Caco-2 (cell line): ENCODE measurements at regions of chr12 and their contacts with region 1.

Region 1: GRCh38 chr12:44015335-44015941 is 179.6 kb downstream of the TMEM117 start:
- DNase-seq: peak in 1 of 2 experiments; percentile 62
- H3K4me3 ChIP-seq: no peak overlapping the region
- H3K4me3 Mint-ChIP-seq: no peak overlapping the region
- H3K27ac Mint-ChIP-seq: no peak overlapping the region
- H3K4me1 ChIP-seq: peaks cover 7% of the 10 kb centered on the region
- H3K4me1 Mint-ChIP-seq: peaks cover 13% of the 10 kb centered on the region
- H3K27me3 ChIP-seq: no peaks in the 10 kb centered on the region
- H3K27me3 Mint-ChIP-seq: no peaks in the 10 kb centered on the region
- CTCF ChIP-seq: peak; percentile 62 to 72

Region 2: GRCh38 chr12:43893670-43894069 is 121.8 kb before region 1 on chr12:
- CTCF ChIA-PET with region 1: no interaction called
- POLR2A ChIA-PET with region 1: no interaction called
- intact Hi-C with region 1: no loop called
- DNase-seq: no peak
- H3K4me3 ChIP-seq: no peak overlapping the region
- H3K4me3 Mint-ChIP-seq: no peak overlapping the region
- H3K27ac Mint-ChIP-seq: no peak overlapping the region
- H3K4me1 ChIP-seq: 0 out of 2 replicates have a peak, but pooled peaks cover 3% of the 10 kb centered on the region
- H3K4me1 Mint-ChIP-seq: no peaks in the 10 kb centered on the region
- H3K27me3 ChIP-seq: no peaks in the 10 kb centered on the region
- H3K27me3 Mint-ChIP-seq: no peaks in the 10 kb centered on the region
- CTCF ChIP-seq: no peak

Region 3: DNA sequence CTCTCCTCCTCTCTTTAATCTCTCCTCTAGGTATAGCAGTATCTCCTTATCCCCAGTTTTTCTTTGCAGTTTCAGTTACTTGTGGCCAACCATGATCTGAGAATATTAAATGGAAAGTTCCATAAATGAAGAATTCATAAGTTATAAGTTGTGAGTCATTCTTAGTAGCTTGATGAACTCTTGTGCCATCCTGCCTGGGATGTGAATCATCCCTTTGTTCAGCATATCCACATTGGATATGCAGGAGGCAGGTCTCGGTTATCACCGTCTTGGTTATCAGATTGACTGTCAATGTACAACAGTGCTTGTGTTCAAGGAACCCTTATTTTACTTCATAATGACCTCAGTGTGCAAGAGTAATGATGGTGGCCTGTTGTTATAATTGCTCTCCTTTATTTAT is 45.6 kb before region 1 on chr12:
- CTCF ChIA-PET with region 1: no interaction called
- POLR2A ChIA-PET with region 1: no interaction called
- intact Hi-C with region 1: no loop called
- DNase-seq: no peak
- H3K4me3 ChIP-seq: no peak overlapping the region
- H3K4me3 Mint-ChIP-seq: no peak overlapping the region
- H3K27ac Mint-ChIP-seq: no peak overlapping the region
- H3K4me1 ChIP-seq: no peaks in the 10 kb centered on the region
- H3K4me1 Mint-ChIP-seq: no peaks in the 10 kb centered on the region
- H3K27me3 ChIP-seq: no peaks in the 10 kb centered on the region
- H3K27me3 Mint-ChIP-seq: no peaks in the 10 kb centered on the region
- CTCF ChIP-seq: no peak

Region 4: DNA sequence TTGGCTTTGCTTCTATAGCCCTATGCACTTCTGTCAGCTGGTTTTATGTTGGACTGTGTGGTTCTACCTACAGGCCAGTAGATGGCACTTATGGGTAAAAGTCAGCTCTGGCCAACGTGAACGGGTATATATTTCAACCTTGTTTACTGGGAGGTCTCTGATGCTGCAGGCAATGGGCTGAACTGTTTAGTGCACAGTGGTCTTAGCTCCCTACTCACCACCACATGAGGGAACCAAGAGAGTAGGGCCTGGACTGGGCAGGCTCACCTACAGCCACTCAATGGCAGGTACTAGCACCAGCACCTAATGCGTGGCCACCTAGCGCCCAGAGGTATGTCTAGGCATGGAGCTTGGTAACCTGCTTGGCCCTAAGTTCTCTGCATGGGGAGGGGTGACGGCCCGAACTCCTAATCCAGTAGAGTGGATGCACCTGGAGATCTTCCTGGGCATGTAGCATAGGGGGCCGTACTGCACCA is 302.3 kb after region 1 on chr12:
- CTCF ChIA-PET with region 1: interaction called, 3 read pairs
- POLR2A ChIA-PET with region 1: no interaction called
- intact Hi-C with region 1: loop called (anchors 10 kb)
- DNase-seq: peak in 1 of 2 experiments; percentile 25
- H3K4me3 ChIP-seq: no peak overlapping the region
- H3K4me3 Mint-ChIP-seq: no peak overlapping the region
- H3K27ac Mint-ChIP-seq: no peak overlapping the region
- H3K4me1 ChIP-seq: peaks cover 9% of the 10 kb centered on the region
- H3K4me1 Mint-ChIP-seq: peaks cover 24% of the 10 kb centered on the region
- H3K27me3 ChIP-seq: no peaks in the 10 kb centered on the region
- H3K27me3 Mint-ChIP-seq: no peaks in the 10 kb centered on the region
- CTCF ChIP-seq: peak; percentile 32 to 40

Region 5: GRCh38 chr12:44497042-44497441 is 481.6 kb after region 1 on chr12:
- CTCF ChIA-PET with region 1: no interaction called
- POLR2A ChIA-PET with region 1: no interaction called
- intact Hi-C with region 1: loop called (anchors 10 kb)
- DNase-seq: peak in 1 of 2 experiments; percentile 30
- H3K4me3 ChIP-seq: no peak overlapping the region
- H3K4me3 Mint-ChIP-seq: no peak overlapping the region
- H3K27ac Mint-ChIP-seq: no peak overlapping the region
- H3K4me1 ChIP-seq: no peaks in the 10 kb centered on the region
- H3K4me1 Mint-ChIP-seq: no peaks in the 10 kb centered on the region
- H3K27me3 ChIP-seq: no peaks in the 10 kb centered on the region
- H3K27me3 Mint-ChIP-seq: peaks cover 2% of the 10 kb centered on the region
- CTCF ChIP-seq: peak; percentile 24 to 50

Region 6: DNA sequence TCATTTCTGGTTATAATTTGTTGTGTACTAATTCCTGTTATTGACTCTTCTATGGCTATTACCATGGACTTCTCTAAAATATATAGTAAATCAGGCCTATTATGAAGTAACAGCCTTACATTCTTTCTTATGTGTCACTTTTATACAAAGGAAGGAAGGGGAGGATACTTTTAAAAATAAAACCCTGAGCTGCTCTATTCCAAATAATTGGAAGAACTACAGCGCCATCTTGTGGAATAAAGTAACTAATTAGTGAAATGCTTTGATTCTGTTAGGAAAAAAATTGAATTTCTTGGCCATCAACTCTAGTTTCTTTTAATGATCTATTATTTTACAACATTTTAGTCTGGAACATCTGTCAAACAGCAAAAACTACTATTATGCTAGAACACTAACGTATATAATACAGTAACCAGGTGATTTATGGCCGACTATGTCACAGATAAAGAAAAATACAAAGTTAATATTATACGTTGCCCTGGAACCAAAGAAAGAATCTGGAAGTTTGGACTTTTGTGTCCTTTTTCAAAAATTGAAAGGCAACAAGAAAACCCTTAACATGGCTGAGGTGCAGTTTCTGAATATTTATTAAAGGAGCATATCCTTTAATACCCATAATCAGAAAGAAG is 915.6 kb after region 1 on chr12:
- CTCF ChIA-PET with region 1: interaction called, 5 read pairs
- POLR2A ChIA-PET with region 1: no interaction called
- intact Hi-C with region 1: loop called (anchors 1 kb)
- DNase-seq: peak in 1 of 2 experiments; percentile 52
- H3K4me3 ChIP-seq: no peak overlapping the region
- H3K4me3 Mint-ChIP-seq: no peak overlapping the region
- H3K27ac Mint-ChIP-seq: no peak overlapping the region
- H3K4me1 ChIP-seq: no peaks in the 10 kb centered on the region
- H3K4me1 Mint-ChIP-seq: no peaks in the 10 kb centered on the region
- H3K27me3 ChIP-seq: peaks cover 2% of the 10 kb centered on the region; the same call in 1 of the 2 replicates
- H3K27me3 Mint-ChIP-seq: no peaks in the 10 kb centered on the region
- CTCF ChIP-seq: peak; percentile 54 to 57